Common myeloid progenitor, CD34-positive (primary cell): ENCODE measurements at regions of chr2 and their contacts with region 1.

Region 1: DNA sequence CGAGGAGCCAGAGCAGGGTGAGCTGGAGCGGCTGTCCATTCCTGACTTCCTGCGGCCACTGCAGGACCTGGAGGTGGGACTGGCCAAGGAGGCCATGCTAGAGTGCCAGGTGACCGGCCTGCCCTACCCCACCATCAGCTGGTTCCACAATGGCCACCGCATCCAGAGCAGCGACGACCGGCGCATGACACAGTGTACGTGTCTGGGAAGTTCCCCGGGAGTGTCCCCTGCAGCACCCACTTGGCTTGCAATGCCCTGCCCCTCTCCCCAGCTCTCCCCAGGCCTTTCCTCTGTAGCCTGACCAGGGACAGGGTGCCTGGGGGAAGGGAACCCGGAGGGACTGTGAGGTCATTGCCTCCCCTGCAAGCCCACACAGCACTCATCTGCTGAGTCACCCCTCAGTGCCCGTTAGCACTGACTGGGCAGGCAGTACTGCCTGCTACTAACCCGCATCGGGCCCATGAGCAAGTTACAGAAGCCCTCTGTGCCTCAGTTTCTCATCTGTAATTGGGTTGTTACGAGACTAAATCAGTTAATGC is 29.4 kb upstream of the GMPPA start:
- DNase-seq: no peak
- H3K4me3 ChIP-seq: no peak overlapping the region
- H3K27ac ChIP-seq: no peak overlapping the region
- H3K4me1 ChIP-seq: no peaks in the 10 kb centered on the region
- H3K27me3 ChIP-seq: no peaks in the 10 kb centered on the region

Region 2: GRCh38 chr2:219484343-219485200 is 15.3 kb after region 1 on chr2:
- CTCF ChIA-PET with region 1: interaction called, 13 read pairs
- POLR2A ChIA-PET with region 1: no interaction called
- DNase-seq: peak in 2 of 3 donors; percentile 24 to 26
- H3K4me3 ChIP-seq: peak overlapping the region in 4 of 7 experiments; percentile 3 to 62 (median 38)
- H3K27ac ChIP-seq: no peak overlapping the region
- H3K4me1 ChIP-seq: peaks cover 0 to 18% (median 12%) of the 10 kb centered on the region in 4 experiments
- H3K27me3 ChIP-seq: peaks cover 0 to 84% (median 43%) of the 10 kb centered on the region in 5 experiments

Region 3: GRCh38 chr2:219829667-219830352 is 360.6 kb after region 1 on chr2:
- CTCF ChIA-PET with region 1: no interaction called
- POLR2A ChIA-PET with region 1: no interaction called
- DNase-seq: no peak
- H3K4me3 ChIP-seq: no peak overlapping the region
- H3K27ac ChIP-seq: no peak overlapping the region
- H3K4me1 ChIP-seq: no peaks in the 10 kb centered on the region
- H3K27me3 ChIP-seq: no peaks in the 10 kb centered on the region